A549 (cell line): ENCODE measurements at regions of chr5 and their contacts with region 1.

Region 1: GRCh38 chr5:140926443-140927227 is 536 bp downstream of the PCDHAC1 start:
- DNase-seq: peak; percentile 76 to 84
- ATAC-seq: peak; percentile 98 to 99
- H3K4me3 ChIP-seq: peak overlapping the region; percentile 53
- H3K27ac ChIP-seq: peak overlapping the region; percentile 54 to 80
- H3K4me1 ChIP-seq: 0 out of 3 replicates have a peak, but pooled peaks cover 4% of the 10 kb centered on the region
- CTCF ChIP-seq: peak; percentile 85
- EP300 ChIP-seq: no peak
- POLR2A ChIP-seq: no peak
- RAD21 ChIP-seq: peak; percentile 67 to 81

Region 2: GRCh38 chr5:140821375-140822280 is 105.0 kb before region 1 on chr5 and contains the start of gene PCDHA5:
- CTCF ChIA-PET with region 1: interaction called, 14 read pairs
- POLR2A ChIA-PET with region 1: interaction called, 5 read pairs
- DNase-seq: peak; percentile 69 to 73
- ATAC-seq: peak; percentile 85 to 92
- H3K4me3 ChIP-seq: peak within 1 kb of the TSS; percentile 57
- H3K27ac ChIP-seq: peak within 1 kb of the TSS; percentile 53 to 74
- H3K4me1 ChIP-seq: no peaks in the 10 kb centered on the region
- CTCF ChIP-seq: peak; percentile 63
- EP300 ChIP-seq: no peak
- POLR2A ChIP-seq: no peak
- RAD21 ChIP-seq: peak; percentile 43 to 65; a peak in 4 of 5 replicates
- polyA plus RNA-seq, gene PCDHA5: 0.32 and 0.62 TPM in 2 replicates

Region 3: GRCh38 chr5:140916349-140916748 is 10.3 kb before region 1 on chr5:
- CTCF ChIA-PET with region 1: interaction called, 12 read pairs
- POLR2A ChIA-PET with region 1: no interaction called
- DNase-seq: no peak
- ATAC-seq: no peak
- H3K4me3 ChIP-seq: no peak overlapping the region
- H3K27ac ChIP-seq: no peak overlapping the region
- H3K4me1 ChIP-seq: no peaks in the 10 kb centered on the region
- CTCF ChIP-seq: no peak
- EP300 ChIP-seq: no peak
- POLR2A ChIP-seq: no peak
- RAD21 ChIP-seq: no peak

Region 4: DNA sequence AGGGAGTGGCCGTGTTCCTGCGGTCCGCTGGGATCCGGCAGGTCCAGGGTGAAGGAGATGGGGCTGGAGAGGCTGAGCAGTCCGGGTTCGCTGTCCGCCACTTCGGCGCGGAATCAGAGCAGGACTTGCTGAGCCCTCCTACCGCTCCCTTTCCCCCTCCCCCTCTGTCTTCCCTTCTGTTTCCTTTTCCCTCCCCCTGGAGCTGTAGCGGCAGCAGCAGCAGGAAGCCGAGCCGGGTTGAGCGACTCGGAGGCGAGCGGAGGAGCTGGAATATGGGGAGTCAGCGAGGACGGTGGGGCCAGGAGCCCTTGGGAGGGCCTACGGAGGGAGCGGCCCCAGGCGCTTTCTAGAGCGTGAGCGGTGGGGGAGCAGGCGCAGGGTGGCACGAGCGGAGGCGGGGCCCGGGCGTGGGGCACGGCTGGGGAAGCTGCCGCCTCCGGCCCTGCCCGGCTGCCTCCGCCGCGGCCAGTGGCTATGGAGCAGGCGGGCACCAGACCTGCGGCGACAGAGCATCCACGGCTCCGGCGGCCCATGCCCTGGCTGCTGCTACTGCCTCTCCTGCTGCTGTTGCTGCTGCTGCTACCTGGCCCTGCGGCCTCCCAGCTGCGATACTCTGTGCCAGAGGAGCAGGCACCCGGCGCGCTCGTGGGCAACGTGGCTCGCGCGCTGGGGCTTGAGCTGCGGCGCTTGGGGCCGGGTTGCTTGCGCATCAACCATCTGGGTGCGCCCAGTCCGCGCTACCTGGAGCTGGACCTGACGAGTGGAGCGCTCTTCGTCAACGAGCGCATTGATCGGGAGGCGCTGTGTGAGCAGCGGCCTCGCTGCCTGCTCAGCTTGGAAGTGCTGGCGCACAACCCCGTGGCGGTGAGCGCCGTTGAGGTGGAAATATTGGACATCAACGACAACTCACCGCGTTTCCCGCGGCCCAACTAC is 39.9 kb after region 1 on chr5 and contains the start of gene PCDHAC2:
- CTCF ChIA-PET with region 1: interaction called, 10 read pairs
- POLR2A ChIA-PET with region 1: interaction called, 3 read pairs
- DNase-seq: peak; percentile 41 to 68
- ATAC-seq: peak; percentile 86 to 92
- H3K4me3 ChIP-seq: peak within 1 kb of the TSS; percentile 53
- H3K27ac ChIP-seq: peak within 1 kb of the TSS; percentile 76 to 90
- H3K4me1 ChIP-seq: peaks cover 7% of the 10 kb centered on the region; the same call in 1 of the 3 replicates
- CTCF ChIP-seq: no peak
- EP300 ChIP-seq: no peak
- POLR2A ChIP-seq: peak; percentile 28
- RAD21 ChIP-seq: no peak
- polyA plus RNA-seq, gene PCDHAC2: 5.3 and 6.3 TPM in 2 replicates

Region 5: GRCh38 chr5:140992828-140993227 is 66.2 kb after region 1 on chr5:
- CTCF ChIA-PET with region 1: interaction called, 13 read pairs
- POLR2A ChIA-PET with region 1: no interaction called
- DNase-seq: no peak
- ATAC-seq: no peak
- H3K4me3 ChIP-seq: no peak overlapping the region
- H3K27ac ChIP-seq: no peak overlapping the region
- H3K4me1 ChIP-seq: peaks cover 14% of the 10 kb centered on the region; the same call in 2 of the 3 replicates
- CTCF ChIP-seq: no peak
- EP300 ChIP-seq: no peak
- POLR2A ChIP-seq: no peak
- RAD21 ChIP-seq: no peak

Region 6: DNA sequence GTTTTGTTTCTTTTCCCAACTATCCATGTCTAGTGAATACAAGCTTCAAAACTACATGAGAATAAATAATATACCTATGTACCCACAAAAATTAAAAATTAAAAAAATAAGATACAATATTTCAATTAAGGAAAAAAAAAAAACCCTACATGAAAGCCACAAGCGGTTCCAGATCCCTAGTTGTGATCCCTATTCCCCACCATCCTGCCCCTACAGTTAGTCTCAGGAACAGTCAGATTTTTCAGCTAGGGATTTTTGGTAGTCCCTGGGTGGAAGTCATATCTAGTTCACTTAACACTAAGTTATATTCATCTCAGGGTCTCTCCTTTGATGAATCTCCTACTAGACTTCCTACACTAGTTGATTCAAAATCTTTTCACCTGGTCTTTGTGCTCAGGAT is 106.0 kb after region 1 on chr5:
- CTCF ChIA-PET with region 1: interaction called, 37 read pairs
- POLR2A ChIA-PET with region 1: no interaction called
- DNase-seq: no peak
- ATAC-seq: no peak
- H3K4me3 ChIP-seq: no peak overlapping the region
- H3K27ac ChIP-seq: no peak overlapping the region
- H3K4me1 ChIP-seq: no peaks in the 10 kb centered on the region
- CTCF ChIP-seq: no peak
- EP300 ChIP-seq: no peak
- POLR2A ChIP-seq: no peak
- RAD21 ChIP-seq: no peak